Psoas muscle (tissue), 8 donors: ENCODE measurements at regions of chr12 and their contacts with region 1.

Region 1: GRCh38 chr12:105967038-105967776 is 171.5 kb downstream of the NUAK1 start:
- DNase-seq: no peak
- ATAC-seq: peak; percentile 92 to 98 (median 94)
- H3K4me3 ChIP-seq: no peak overlapping the region
- H3K27ac ChIP-seq: peak overlapping the region; percentile 70
- H3K4me1 ChIP-seq: peaks cover 20% of the 10 kb centered on the region
- H3K27me3 ChIP-seq: no peaks in the 10 kb centered on the region
- CTCF ChIP-seq: no peak

Region 2: GRCh38 chr12:105677672-105678071 is 289.5 kb before region 1 on chr12:
- intact Hi-C with region 1: no loop called
- DNase-seq: no peak
- ATAC-seq: peak in 3 of 4 donors; percentile 30 to 61 (median 54)
- H3K4me3 ChIP-seq: no peak overlapping the region
- H3K27ac ChIP-seq: peak overlapping the region; percentile 4
- H3K4me1 ChIP-seq: peaks cover 21% of the 10 kb centered on the region
- H3K27me3 ChIP-seq: no peaks in the 10 kb centered on the region
- CTCF ChIP-seq: no peak

Region 3: DNA sequence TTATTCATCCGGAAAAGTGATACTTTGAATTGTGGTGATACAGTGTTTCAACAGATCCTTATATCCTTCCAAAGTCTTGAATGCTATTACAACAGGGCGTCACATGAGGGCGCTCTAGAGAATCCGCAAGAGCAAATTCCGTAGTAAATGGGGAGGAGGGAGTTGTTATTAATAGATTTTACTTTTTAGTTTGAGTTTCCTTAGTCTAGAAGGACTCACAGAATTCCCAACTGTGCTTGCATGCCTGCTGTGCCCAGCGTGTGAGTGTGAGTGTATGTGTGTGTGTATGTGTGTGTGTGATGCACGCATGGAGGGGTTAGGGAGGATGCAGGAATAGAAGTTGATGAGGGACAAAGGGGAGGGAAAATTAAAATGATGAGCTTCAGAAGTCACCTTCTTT is 261.4 kb before region 1 on chr12:
- intact Hi-C with region 1: loop called in 1 of 2 experiments (anchors 2 kb)
- DNase-seq: peak in 1 of 2 donors; percentile 29
- ATAC-seq: peak; percentile 47 to 74 (median 60)
- H3K4me3 ChIP-seq: no peak overlapping the region
- H3K27ac ChIP-seq: peak overlapping the region; percentile 79
- H3K4me1 ChIP-seq: peaks cover 23% of the 10 kb centered on the region
- H3K27me3 ChIP-seq: no peaks in the 10 kb centered on the region
- CTCF ChIP-seq: peak; percentile 77

Region 4: GRCh38 chr12:105922670-105923102 is 44.5 kb before region 1 on chr12:
- intact Hi-C with region 1: loop called in 1 of 2 experiments (anchors 2 kb)
- DNase-seq: no peak
- ATAC-seq: peak; percentile 97 to 99 (median 98)
- H3K4me3 ChIP-seq: peak overlapping the region; percentile 1
- H3K27ac ChIP-seq: peak overlapping the region; percentile 90
- H3K4me1 ChIP-seq: peaks cover 24% of the 10 kb centered on the region
- H3K27me3 ChIP-seq: no peaks in the 10 kb centered on the region
- CTCF ChIP-seq: no peak

Region 5: GRCh38 chr12:106000372-106001104 is 33.3 kb after region 1 on chr12:
- intact Hi-C with region 1: no loop called
- DNase-seq: no peak
- ATAC-seq: no peak
- H3K4me3 ChIP-seq: no peak overlapping the region
- H3K27ac ChIP-seq: no peak overlapping the region
- H3K4me1 ChIP-seq: no peaks in the 10 kb centered on the region
- H3K27me3 ChIP-seq: no peaks in the 10 kb centered on the region
- CTCF ChIP-seq: no peak